Mammary epithelial cell (primary cell): ENCODE measurements at regions of chr21 and their contacts with region 1.

Region 1: DNA sequence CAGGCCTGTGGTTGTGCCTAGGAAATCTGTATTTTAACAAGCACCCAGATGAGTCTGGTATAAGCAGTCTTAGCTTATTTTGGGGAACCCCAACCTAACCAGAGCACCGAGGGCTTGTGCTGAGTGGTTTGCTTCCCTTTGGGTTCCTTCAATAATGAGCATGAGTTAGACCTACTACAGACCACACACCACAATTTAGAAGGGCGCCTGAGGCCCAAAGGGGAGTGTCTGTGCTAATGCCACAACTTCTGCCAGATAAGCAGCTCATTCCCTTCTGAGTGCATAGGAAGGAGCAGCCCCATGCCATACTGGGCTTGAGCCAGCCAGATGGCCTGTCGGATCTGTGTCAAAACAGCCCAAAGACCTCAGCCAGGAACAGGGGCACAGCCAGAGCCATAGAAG is 15.4 kb upstream of the LSS start:
- DNase-seq: no peak
- H3K4me3 ChIP-seq: no peak overlapping the region
- H3K27ac ChIP-seq: no peak overlapping the region
- H3K4me1 ChIP-seq: no peaks in the 10 kb centered on the region
- H3K27me3 ChIP-seq: no peaks in the 10 kb centered on the region
- CTCF ChIP-seq: no peak

Region 2: GRCh38 chr21:46179708-46180078 is 64.3 kb before region 1 on chr21:
- CTCF ChIA-PET with region 1: no interaction called
- dilution Hi-C with region 1: loop called (anchors 5 kb)
- in situ Hi-C with region 1: no loop called
- intact Hi-C with region 1: no loop called
- DNase-seq: no peak
- H3K4me3 ChIP-seq: no peak overlapping the region
- H3K27ac ChIP-seq: no peak overlapping the region
- H3K4me1 ChIP-seq: peaks cover 6% of the 10 kb centered on the region
- H3K27me3 ChIP-seq: no peaks in the 10 kb centered on the region
- CTCF ChIP-seq: no peak